ENCODE measurements at regions of chr11 and their contacts with region 1.

Region 1: DNA sequence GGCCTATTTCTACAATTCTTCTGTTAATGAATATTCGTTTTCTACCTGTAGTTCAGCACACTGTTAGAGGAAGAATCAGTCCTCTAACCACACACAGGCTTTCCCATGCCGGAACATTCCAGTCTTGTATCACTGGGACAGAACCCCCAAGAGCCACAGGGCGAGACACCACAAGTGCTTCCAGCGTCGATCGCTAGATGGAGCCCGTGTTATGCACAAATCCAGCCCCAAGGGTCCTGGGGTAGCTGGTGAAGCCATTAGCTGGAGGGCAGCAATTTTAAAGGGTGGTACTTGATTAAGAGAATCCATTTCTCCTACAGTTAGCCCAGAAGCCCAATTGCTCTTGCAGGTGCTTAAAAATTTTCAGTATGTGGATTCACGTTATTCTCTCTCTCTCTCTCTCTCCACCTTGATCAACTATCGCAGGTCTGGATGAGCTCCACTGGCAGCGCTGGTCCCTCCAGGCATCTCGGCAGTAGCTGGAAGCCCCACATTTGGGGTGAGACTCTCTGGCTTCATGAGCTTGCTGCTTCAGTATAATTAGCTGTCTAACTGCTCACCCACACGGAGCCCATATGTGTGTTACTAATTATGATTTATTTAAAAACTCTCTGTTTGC is 148.2 kb upstream of the SNX19 start:
- DNase-seq: peak in 2 of 3 donors; percentile 41 to 51
- ATAC-seq: peak; percentile 28
- H3K4me3 ChIP-seq: no peak overlapping the region
- H3K4me1 ChIP-seq: no peaks in the 10 kb centered on the region
- CTCF ChIP-seq: peak; percentile 33

Region 2: GRCh38 chr11:130827451-130828377 is 236.8 kb before region 1 on chr11:
- intact Hi-C with region 1: no loop called
- DNase-seq: peak; percentile 51 to 65 (median 65)
- ATAC-seq: peak; percentile 88
- H3K4me3 ChIP-seq: no peak overlapping the region
- H3K4me1 ChIP-seq: no peaks in the 10 kb centered on the region
- CTCF ChIP-seq: no peak

Region 3: GRCh38 chr11:130964058-130964792 is 100.3 kb before region 1 on chr11:
- intact Hi-C with region 1: no loop called
- DNase-seq: no peak
- ATAC-seq: no peak
- H3K4me3 ChIP-seq: no peak overlapping the region
- H3K4me1 ChIP-seq: no peaks in the 10 kb centered on the region
- CTCF ChIP-seq: no peak

Region 4: GRCh38 chr11:131392528-131393255 is 328.2 kb after region 1 on chr11:
- intact Hi-C with region 1: no loop called
- DNase-seq: peak in 1 of 3 donors; percentile 22
- ATAC-seq: peak; percentile 54
- H3K4me3 ChIP-seq: no peak overlapping the region
- H3K4me1 ChIP-seq: no peaks in the 10 kb centered on the region
- CTCF ChIP-seq: no peak

Region 5: GRCh38 chr11:131423715-131424114 is 359.2 kb after region 1 on chr11:
- intact Hi-C with region 1: no loop called
- DNase-seq: no peak
- ATAC-seq: peak; percentile 42
- H3K4me3 ChIP-seq: no peak overlapping the region
- H3K4me1 ChIP-seq: no peaks in the 10 kb centered on the region
- CTCF ChIP-seq: no peak

Region 6: DNA sequence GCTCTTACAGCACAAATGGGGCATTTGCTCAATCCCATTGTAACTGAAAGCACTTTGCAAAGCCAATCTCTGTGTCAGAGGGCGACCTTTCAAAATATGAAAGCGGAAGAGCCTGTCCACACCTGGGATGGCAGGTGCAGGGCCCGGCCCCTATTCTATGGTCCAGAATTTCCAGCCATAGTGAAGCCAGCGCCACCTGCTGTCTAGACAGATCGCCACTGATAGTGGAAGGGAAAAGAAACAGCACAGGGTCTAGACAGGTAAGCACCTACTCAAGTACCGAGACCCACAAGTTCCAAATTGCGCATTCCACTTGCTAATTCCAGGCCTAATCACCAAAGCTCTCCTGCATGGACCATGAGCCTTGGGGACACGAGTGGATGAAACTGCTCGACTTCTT is 447.3 kb after region 1 on chr11:
- intact Hi-C with region 1: loop called in 1 of 2 experiments (anchors 10 kb)
- DNase-seq: peak in 2 of 3 donors; percentile 57 to 74
- ATAC-seq: peak; percentile 72
- H3K4me3 ChIP-seq: no peak overlapping the region
- H3K4me1 ChIP-seq: no peaks in the 10 kb centered on the region
- CTCF ChIP-seq: peak; percentile 37

Region 7: GRCh38 chr11:131674051-131674755 is 609.7 kb after region 1 on chr11:
- intact Hi-C with region 1: loop called in 1 of 2 experiments (anchors 5 kb)
- DNase-seq: peak in 2 of 3 donors; percentile 58 to 66
- ATAC-seq: peak; percentile 84
- H3K4me3 ChIP-seq: no peak overlapping the region
- H3K4me1 ChIP-seq: no peaks in the 10 kb centered on the region
- CTCF ChIP-seq: peak; percentile 79

Measured in mucosa of descending colon (tissue), 3 donors.